Psoas muscle (tissue), 8 donors: ENCODE measurements at regions of chr15 and their contacts with region 1.

Region 1: DNA sequence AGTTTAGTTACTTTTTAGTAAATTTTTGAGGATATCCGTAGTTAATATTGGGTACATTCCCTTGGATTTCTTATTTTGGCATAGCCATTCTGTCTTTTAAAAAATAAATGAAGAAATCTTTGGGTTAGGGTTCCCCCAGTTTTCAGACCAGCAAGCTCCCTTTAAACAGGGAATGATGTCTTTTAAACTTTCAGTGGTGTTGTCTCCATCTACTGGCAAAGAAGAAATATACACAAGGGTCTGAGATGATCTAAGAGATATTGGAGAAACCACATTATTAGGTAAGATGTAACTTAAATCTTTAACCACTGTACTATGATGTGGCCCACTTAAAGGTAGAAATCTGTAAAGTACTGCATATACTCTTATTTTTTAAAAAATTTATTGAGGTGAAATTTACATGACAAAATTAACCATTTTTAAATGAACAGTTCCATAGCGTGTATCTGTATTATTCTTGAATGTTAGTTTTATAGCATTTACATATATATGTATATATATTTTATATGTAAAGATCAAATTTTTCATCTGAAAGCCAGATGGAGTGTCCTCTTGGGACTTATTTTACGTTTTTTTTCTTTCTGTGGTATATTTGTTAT is 35.1 kb upstream of the EIF3J start:
- DNase-seq: no peak
- ATAC-seq: peak; percentile 32 to 79 (median 62)
- H3K4me3 ChIP-seq: no peak overlapping the region
- H3K27ac ChIP-seq: no peak overlapping the region
- H3K4me1 ChIP-seq: no peaks in the 10 kb centered on the region
- H3K27me3 ChIP-seq: no peaks in the 10 kb centered on the region
- CTCF ChIP-seq: peak; percentile 66

Region 2: GRCh38 chr15:44286814-44287452 is 214.9 kb before region 1 on chr15:
- intact Hi-C with region 1: loop called (anchors 10 kb)
- DNase-seq: no peak
- ATAC-seq: no peak
- H3K4me3 ChIP-seq: peak overlapping the region; percentile 72
- H3K27ac ChIP-seq: peak overlapping the region; percentile 77
- H3K4me1 ChIP-seq: peaks cover 23% of the 10 kb centered on the region
- H3K27me3 ChIP-seq: no peaks in the 10 kb centered on the region
- CTCF ChIP-seq: peak; percentile 12